ENCODE measurements at regions of chr22 and their contacts with region 1.

Region 1: DNA sequence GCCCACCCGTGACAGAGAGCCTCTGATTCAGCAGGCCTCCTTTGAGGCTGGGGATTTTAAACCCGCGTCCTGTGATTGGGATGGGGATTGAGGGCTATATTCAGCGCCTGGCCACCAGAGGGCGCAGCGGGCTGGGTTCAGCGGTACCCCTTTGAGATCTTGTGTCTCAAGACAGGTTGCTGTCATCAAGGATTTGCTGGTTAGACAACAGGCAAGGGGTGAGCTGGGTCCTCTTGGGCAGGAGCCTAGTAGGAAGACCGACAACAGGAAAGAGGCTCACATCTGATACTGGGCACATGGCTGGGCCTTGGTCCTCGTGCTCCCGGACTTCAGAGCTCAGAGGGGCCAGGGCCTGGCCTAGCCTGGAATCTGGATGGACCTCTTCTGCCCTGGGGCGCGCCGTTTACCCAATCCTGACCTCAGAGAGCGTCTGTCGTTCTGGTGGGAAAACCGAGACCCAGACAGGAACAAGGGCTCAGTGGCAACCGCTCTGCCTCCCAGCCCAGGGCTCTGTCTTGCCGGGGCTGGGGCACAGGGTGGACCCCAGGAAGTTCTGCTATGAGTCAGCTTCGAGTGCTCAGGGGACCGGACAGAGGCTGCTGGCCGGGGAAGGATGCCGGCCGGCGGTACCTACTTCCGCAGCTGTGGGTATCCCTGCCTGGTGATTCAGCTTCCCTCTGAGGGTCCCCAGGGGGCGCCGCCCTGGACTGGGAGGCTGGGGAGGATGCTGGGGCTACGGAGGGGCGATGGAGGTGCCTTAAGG is 929 bp upstream of the SLC35E4 start:
- DNase-seq: peak; percentile 74
- H3K4me3 ChIP-seq: peak overlapping the region; percentile 39
- H3K27ac ChIP-seq: peak overlapping the region; percentile 79
- H3K27me3 ChIP-seq: no peaks in the 10 kb centered on the region
- CTCF ChIP-seq: peak; percentile 96

Region 2: DNA sequence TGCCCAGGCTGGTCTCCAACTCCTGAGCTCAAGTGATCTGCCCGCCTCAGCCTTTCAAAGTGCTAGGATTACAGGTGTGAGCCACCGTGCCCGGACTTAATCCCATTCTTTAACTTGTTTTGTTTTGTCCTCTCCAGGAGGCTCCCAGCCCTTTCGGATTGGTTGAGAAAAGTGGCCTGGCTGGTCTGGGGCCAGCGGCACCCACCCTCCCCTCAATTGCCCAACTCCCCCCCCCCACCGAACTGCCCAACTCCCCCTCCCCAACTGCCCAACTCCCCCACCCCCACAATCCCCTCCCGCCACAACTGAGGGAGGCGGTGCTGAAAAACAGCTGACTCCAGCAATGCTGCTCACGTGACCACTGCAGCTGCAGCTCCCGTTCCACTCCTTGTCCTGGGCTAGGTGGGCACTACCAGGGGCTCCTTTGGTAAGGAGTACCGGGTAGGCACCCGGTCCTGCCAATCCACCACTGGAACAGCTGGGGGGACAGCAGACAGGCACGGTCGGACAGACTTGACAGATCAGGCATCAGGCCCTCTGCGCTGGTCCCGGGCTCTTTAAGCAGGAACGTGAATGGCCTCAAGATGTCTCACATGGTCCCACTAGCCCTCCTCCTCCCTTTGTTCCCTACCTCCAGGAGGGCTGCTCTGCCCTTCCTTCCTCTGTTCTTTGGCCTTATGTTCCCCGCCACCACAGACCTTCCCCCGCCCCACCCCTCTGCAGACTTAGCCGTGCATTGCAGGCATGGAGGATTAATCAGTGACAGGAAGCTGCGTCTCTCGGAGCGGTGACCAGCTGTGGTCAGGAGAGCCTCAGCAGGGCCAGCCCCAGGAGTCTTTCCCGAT is 28.0 kb before region 1 on chr22 and contains the start of gene TCN2:
- CTCF ChIA-PET with region 1: interaction called, 42 read pairs
- POLR2A ChIA-PET with region 1: no interaction called
- DNase-seq: no peak
- H3K4me3 ChIP-seq: peak within 1 kb of the TSS; percentile 61
- H3K27ac ChIP-seq: peak within 1 kb of the TSS; percentile 65
- H3K27me3 ChIP-seq: no peaks in the 10 kb centered on the region
- CTCF ChIP-seq: peak; percentile 12; the same call in 1 of the 2 replicates
- polyA plus RNA-seq, gene TCN2: 6.6 and 9.1 TPM in 2 replicates

Region 3: GRCh38 chr22:30617819-30618218 is 16.8 kb before region 1 on chr22:
- CTCF ChIA-PET with region 1: interaction called, 11 read pairs
- POLR2A ChIA-PET with region 1: no interaction called
- DNase-seq: no peak
- H3K4me3 ChIP-seq: no peak overlapping the region
- H3K27ac ChIP-seq: no peak overlapping the region
- H3K27me3 ChIP-seq: no peaks in the 10 kb centered on the region
- CTCF ChIP-seq: no peak

Region 4: GRCh38 chr22:30742291-30743256 is 107.9 kb after region 1 on chr22:
- CTCF ChIA-PET with region 1: interaction called, 15 read pairs
- POLR2A ChIA-PET with region 1: no interaction called
- DNase-seq: no peak
- H3K4me3 ChIP-seq: no peak overlapping the region
- H3K27ac ChIP-seq: no peak overlapping the region
- H3K27me3 ChIP-seq: no peaks in the 10 kb centered on the region
- CTCF ChIP-seq: no peak

Region 5: GRCh38 chr22:31093086-31093850 is 458.6 kb after region 1 on chr22:
- CTCF ChIA-PET with region 1: no interaction called
- POLR2A ChIA-PET with region 1: interaction called, 12 read pairs
- DNase-seq: no peak
- H3K4me3 ChIP-seq: no peak overlapping the region
- H3K27ac ChIP-seq: no peak overlapping the region
- H3K27me3 ChIP-seq: no peaks in the 10 kb centered on the region
- CTCF ChIP-seq: no peak

Measured in AG04450 (cell line).